ENCODE measurements at regions of chr2 and their contacts with region 1.

Region 1: GRCh38 chr2:233443468-233444183 is 89.3 kb downstream of the DGKD start:
- DNase-seq: peak; percentile 68 to 91 (median 82)
- ATAC-seq: peak; percentile 87 to 95 (median 90)
- H3K4me3 ChIP-seq: no peak overlapping the region
- H3K4me3 Mint-ChIP-seq: no peak overlapping the region
- H3K27ac ChIP-seq: no peak overlapping the region
- H3K27ac Mint-ChIP-seq: peak overlapping the region; percentile 70 to 87
- H3K4me1 ChIP-seq: peaks cover 0 to 17% of the 10 kb centered on the region in 2 experiments
- H3K4me1 Mint-ChIP-seq: peaks cover 23 to 35% (median 28%) of the 10 kb centered on the region in 3 donors
- H3K27me3 ChIP-seq: no peaks in the 10 kb centered on the region
- H3K27me3 Mint-ChIP-seq: no peaks in the 10 kb centered on the region

Region 2: DNA sequence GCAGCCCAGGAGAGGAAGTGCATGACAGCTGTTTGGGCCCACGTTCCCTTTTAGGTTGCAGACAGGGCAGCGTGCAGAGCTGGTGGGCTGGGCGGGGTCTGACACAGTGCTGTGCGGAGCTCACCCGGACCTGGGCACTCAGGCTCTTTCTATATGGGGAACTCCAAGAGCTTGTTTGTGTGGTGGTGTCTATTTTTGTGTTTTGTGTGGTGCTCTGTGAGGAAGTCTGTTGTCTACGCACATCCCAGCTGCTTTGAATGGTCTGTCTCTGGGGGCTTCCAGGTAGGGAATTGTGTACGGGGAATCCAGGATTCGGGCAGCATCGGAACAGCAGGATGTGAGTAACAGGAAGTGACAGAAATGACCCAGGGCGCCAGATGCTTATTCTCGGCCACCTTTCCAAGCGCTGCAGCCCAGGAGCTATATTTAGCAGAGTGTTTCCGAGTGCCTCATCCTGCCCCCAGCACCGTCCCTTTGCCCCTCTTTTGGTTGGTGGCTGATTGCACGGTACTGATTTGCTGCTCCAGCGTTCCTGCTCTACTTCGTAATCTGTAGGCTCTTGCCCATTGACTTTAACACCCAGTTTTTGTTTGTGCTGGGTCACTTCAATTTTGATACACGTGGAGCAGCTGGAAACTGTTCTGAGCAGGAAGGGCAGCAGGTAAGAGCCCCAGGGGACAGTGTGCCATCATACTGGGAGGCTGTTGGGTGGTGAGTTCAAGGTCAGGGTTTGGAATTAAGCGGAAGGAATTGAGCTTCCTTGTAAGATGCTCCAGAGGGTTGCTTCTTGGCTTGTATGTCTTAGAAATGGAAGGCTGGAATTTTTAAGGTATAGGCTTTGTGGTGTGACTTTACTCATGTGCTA is 24.6 kb before region 1 on chr2:
- CTCF ChIA-PET with region 1: interaction called, 7 to 21 read pairs
- POLR2A ChIA-PET with region 1: no interaction called
- DNase-seq: peak in 34 of 35 experiments; percentile 24 to 76 (median 53)
- ATAC-seq: peak; percentile 54 to 75 (median 55)
- H3K4me3 ChIP-seq: peak overlapping the region; percentile 44 to 64
- H3K4me3 Mint-ChIP-seq: peak overlapping the region; percentile 79 to 89 (median 89)
- H3K27ac ChIP-seq: peak overlapping the region; percentile 76
- H3K27ac Mint-ChIP-seq: peak overlapping the region; percentile 98 to 100
- H3K4me1 ChIP-seq: peaks cover 58 to 96% of the 10 kb centered on the region in 2 experiments
- H3K4me1 Mint-ChIP-seq: peaks cover 97 to 98% (median 98%) of the 10 kb centered on the region in 3 donors
- H3K27me3 ChIP-seq: no peaks in the 10 kb centered on the region
- H3K27me3 Mint-ChIP-seq: no peaks in the 10 kb centered on the region